ENCODE measurements at regions of chr11 and their contacts with region 1.

Region 1: DNA sequence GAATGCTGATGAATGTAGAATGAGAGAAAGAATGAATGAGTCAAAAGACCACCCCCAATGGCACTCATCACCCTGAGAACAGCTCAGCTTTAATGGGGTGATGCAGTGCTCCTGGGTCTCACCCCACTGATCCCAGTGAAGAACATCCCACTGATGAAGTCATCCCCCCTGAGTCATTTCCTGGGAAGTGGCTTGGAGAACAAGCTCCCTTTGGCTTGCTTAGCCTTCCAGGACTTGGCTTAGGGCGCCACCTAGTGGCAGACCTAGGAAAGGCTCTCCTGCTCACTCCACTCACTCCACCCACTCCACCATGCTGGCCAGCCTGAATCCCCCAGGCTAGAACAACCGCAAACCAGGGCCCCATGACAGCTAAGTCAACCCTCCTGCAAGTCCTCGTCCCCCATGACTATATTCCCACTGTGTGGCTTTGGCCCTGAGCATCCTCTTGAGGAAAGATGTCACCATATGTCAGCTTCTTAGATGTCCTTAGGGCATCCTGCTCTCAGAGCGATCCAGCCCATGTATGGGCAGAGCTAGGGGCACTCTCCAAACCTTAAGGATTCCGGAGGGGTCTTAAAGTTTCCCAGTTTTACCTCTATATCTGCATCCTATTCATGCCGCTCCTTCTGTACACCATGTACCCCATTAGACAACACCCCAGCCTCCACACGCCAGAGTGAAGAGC is 17.8 kb upstream of the TMPRSS13 start:
- DNase-seq: peak; percentile 66 to 86 (median 78)
- H3K4me3 ChIP-seq: no peak overlapping the region
- H3K4me3 Mint-ChIP-seq: peak overlapping the region; percentile 0 to 66 (median 50)
- H3K27ac ChIP-seq: no peak overlapping the region
- H3K27ac Mint-ChIP-seq: peak overlapping the region; percentile 43 to 95 (median 72)
- H3K4me1 ChIP-seq: peaks cover 58% of the 10 kb centered on the region
- H3K4me1 Mint-ChIP-seq: peaks cover 53 to 76% (median 76%) of the 10 kb centered on the region in 3 donors
- H3K27me3 ChIP-seq: no peaks in the 10 kb centered on the region
- H3K27me3 Mint-ChIP-seq: peaks cover 0 to 3% of the 10 kb centered on the region in 2 donors

Region 2: DNA sequence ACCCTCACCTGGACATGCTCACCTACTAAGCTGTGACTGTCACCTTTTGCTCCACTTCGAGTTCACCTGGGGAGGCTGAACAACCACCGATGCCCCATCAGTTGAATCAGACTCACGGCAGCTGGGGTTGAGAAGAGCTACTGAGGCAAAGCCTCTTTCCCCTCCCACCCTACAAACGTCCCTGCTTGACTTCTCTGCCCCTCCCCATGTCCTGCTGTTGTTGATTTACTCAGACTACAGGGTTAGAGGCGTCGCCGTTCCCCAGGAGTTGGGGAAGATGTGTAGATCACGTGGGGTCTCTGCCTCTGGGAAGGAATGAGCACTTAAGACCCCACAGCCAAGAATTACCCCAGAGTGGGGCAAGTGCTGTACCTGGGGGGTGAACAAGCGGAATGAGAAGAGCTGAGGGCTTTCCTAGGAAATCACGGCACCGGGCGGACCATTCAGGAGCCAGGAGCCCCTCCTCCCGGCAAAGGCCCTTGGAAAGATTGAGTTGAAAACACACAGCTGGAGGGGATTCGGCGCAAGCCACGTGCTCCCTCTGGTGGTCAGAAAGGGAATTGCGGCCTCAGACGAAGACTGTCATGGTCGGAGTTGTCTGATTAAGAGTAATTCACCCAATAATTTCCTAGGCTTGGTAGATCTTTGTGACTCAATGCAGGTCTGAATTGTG is 129.5 kb before region 1 on chr11:
- CTCF ChIA-PET with region 1: interaction called, 255 read pairs
- POLR2A ChIA-PET with region 1: interaction called, 4 read pairs
- DNase-seq: peak; percentile 69 to 88 (median 75)
- H3K4me3 ChIP-seq: no peak overlapping the region
- H3K4me3 Mint-ChIP-seq: peak overlapping the region in 4 of 7 donors; percentile 54 to 70 (median 56)
- H3K27ac ChIP-seq: no peak overlapping the region
- H3K27ac Mint-ChIP-seq: peak overlapping the region; percentile 74 to 93 (median 88)
- H3K4me1 ChIP-seq: peaks cover 56% of the 10 kb centered on the region
- H3K4me1 Mint-ChIP-seq: peaks cover 38 to 61% (median 47%) of the 10 kb centered on the region in 3 donors
- H3K27me3 ChIP-seq: no peaks in the 10 kb centered on the region
- H3K27me3 Mint-ChIP-seq: peaks cover 0 to 1% of the 10 kb centered on the region in 2 donors

Region 3: GRCh38 chr11:117843666-117844484 is 103.1 kb before region 1 on chr11:
- CTCF ChIA-PET with region 1: interaction called, 80 read pairs
- POLR2A ChIA-PET with region 1: interaction called, 3 read pairs
- DNase-seq: peak; percentile 64 to 87 (median 76)
- H3K4me3 ChIP-seq: no peak overlapping the region
- H3K4me3 Mint-ChIP-seq: no peak overlapping the region
- H3K27ac ChIP-seq: no peak overlapping the region
- H3K27ac Mint-ChIP-seq: no peak overlapping the region
- H3K4me1 ChIP-seq: peaks cover 8% of the 10 kb centered on the region
- H3K4me1 Mint-ChIP-seq: peaks cover 2 to 9% (median 4%) of the 10 kb centered on the region in 3 donors
- H3K27me3 ChIP-seq: no peaks in the 10 kb centered on the region
- H3K27me3 Mint-ChIP-seq: peaks cover 0 to 3% of the 10 kb centered on the region in 2 donors

Region 4: GRCh38 chr11:117959438-117960149 is 12.6 kb after region 1 on chr11:
- CTCF ChIA-PET with region 1: interaction called, 13 read pairs
- POLR2A ChIA-PET with region 1: no interaction called
- DNase-seq: no peak
- H3K4me3 ChIP-seq: no peak overlapping the region
- H3K4me3 Mint-ChIP-seq: peak overlapping the region in 3 of 7 donors; percentile 15 to 33 (median 24)
- H3K27ac ChIP-seq: no peak overlapping the region
- H3K27ac Mint-ChIP-seq: peak overlapping the region in 2 of 8 donors; percentile 6 to 23
- H3K4me1 ChIP-seq: peaks cover 17% of the 10 kb centered on the region
- H3K4me1 Mint-ChIP-seq: peaks cover 40 to 68% (median 65%) of the 10 kb centered on the region in 3 donors
- H3K27me3 ChIP-seq: no peaks in the 10 kb centered on the region
- H3K27me3 Mint-ChIP-seq: peaks cover 0 to 1% of the 10 kb centered on the region in 2 donors

Region 5: DNA sequence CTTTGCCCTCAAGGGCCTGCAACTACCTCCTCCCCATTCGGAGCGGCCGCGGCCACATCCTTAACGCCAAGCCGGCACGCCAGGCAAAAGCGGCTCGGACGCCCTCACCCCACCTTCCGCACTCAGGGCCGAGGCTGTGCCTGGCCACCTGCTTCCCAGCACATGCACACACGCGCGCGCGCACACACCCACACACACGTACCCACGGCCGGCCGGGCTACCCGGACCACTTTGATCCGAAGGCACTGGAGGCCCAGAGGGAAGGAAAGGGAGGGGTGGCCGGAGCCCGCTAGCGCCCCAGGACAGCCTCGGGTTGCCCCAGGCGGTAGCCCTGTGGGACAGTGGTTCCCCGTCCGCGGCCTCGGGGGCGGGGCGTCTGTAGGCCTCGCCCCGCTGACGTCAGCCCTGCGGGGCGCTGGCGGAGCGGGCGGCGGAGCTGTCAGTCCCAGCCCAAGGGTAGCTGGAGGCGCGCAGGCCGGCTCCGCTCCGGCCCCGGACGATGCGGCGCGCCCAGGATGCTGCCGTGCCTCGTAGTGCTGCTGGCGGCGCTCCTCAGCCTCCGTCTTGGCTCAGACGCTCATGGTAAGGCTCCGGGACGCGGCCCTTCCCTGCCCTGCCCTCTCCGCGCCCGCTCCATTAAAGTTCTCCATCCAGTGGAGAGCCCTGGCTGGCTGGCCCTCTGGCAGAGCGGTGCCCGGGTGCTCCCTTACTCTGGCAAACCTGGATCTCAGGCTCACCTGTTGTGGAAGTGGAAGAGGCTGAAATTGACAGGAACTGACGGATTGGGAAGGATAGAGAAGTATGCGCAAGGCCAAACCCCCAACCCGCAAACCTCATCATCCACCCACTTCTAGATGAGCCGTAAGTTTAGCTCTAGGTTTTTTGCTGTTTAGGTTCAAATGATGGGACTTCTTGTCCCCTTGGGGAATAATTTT is 39.2 kb after region 1 on chr11 and contains the start of gene IL10RA:
- CTCF ChIA-PET with region 1: interaction called, 296 read pairs
- POLR2A ChIA-PET with region 1: interaction called, 108 read pairs
- DNase-seq: peak; percentile 78 to 88 (median 82)
- H3K4me3 ChIP-seq: peak within 1 kb of the TSS; percentile 100
- H3K4me3 Mint-ChIP-seq: peak within 1 kb of the TSS; percentile 90 to 97 (median 93)
- H3K27ac ChIP-seq: peak within 1 kb of the TSS; percentile 98
- H3K27ac Mint-ChIP-seq: peak within 1 kb of the TSS; percentile 85 to 99 (median 92)
- H3K4me1 ChIP-seq: peaks cover 63% of the 10 kb centered on the region
- H3K4me1 Mint-ChIP-seq: peaks cover 53 to 71% (median 63%) of the 10 kb centered on the region in 3 donors
- H3K27me3 ChIP-seq: no peaks in the 10 kb centered on the region
- H3K27me3 Mint-ChIP-seq: no peaks in the 10 kb centered on the region
- total RNA-seq, gene IL10RA: 120 to 122 TPM

Region 6: DNA sequence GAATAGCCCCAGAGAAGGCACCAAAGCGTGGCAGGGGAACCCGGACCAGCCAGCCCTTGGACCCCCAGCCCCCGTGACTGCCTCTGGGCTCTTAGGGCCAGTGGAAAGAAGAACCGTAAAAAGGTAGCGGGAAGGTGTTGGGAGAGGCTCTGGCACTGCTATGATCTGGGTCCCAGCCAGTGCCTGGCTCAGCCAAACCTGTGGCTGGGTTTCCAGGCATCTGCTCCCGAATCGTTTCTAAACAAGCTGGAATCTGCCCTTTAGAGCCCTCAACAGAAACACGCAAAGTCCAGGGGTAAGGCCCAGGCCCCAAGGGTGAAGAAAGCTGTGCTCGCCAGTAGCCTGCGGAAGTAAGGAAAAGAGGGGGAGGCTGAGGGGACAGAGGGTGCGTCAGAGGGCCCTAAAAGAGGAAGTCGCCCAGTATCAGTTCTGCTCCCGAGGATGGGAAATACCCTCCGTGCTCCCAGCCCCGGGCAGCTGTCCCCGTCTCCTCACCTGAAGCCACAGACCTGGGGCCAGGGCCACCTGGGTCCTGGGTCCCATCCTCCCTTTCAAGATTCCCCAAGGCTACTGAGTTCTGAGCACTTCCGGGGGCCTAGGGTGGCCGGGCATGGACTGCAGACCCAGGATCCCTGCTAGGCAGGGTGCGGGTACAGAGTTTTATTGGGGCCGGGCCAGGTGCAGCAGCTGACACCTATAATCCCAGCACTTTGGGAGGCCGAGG is 63.9 kb after region 1 on chr11:
- CTCF ChIA-PET with region 1: interaction called, 11 read pairs
- POLR2A ChIA-PET with region 1: interaction called, 11 read pairs
- DNase-seq: no peak
- H3K4me3 ChIP-seq: no peak overlapping the region
- H3K4me3 Mint-ChIP-seq: peak overlapping the region in 1 of 7 donors; percentile 70
- H3K27ac ChIP-seq: no peak overlapping the region
- H3K27ac Mint-ChIP-seq: peak overlapping the region; percentile 69 to 100 (median 91)
- H3K4me1 ChIP-seq: peaks cover 100% of the 10 kb centered on the region
- H3K4me1 Mint-ChIP-seq: peaks cover 98 to 100% (median 100%) of the 10 kb centered on the region in 3 donors
- H3K27me3 ChIP-seq: no peaks in the 10 kb centered on the region
- H3K27me3 Mint-ChIP-seq: no peaks in the 10 kb centered on the region

Region 7: GRCh38 chr11:118240999-118241768 is 294.2 kb after region 1 on chr11:
- CTCF ChIA-PET with region 1: no interaction called
- POLR2A ChIA-PET with region 1: no interaction called
- DNase-seq: peak; percentile 36 to 82 (median 45)
- H3K4me3 ChIP-seq: peak overlapping the region; percentile 22
- H3K4me3 Mint-ChIP-seq: peak overlapping the region; percentile 51 to 87 (median 75)
- H3K27ac ChIP-seq: peak overlapping the region; percentile 64
- H3K27ac Mint-ChIP-seq: peak overlapping the region; percentile 88 to 96 (median 94)
- H3K4me1 ChIP-seq: peaks cover 50% of the 10 kb centered on the region
- H3K4me1 Mint-ChIP-seq: peaks cover 72 to 97% (median 90%) of the 10 kb centered on the region in 3 donors
- H3K27me3 ChIP-seq: no peaks in the 10 kb centered on the region
- H3K27me3 Mint-ChIP-seq: peaks cover 0 to 2% of the 10 kb centered on the region in 2 donors

Measured in CD8-positive, alpha-beta memory T cell (primary cell).